Activated T-helper 1 cell treated with anti-CD3 and anti-CD28 coated beads, Interleukin-12 subunit alpha, Interleukin-12 subunit beta, Interleukin-2, Interleukin-4 antibody, amounts not matched to agents 30 ng/mL and 10 ng/mL and 1 ng/mL, durations not matched to agents 14 hours and 24 hours and 36 hours (primary cell): ENCODE measurements at regions of chr15 and their contacts with region 1.

Region 1: GRCh38 chr15:58980351-58980939 is 7.0 kb upstream of the RNF111 start:
- DNase-seq: no peak
- H3K4me3 Mint-ChIP-seq: no peak overlapping the region
- H3K27ac Mint-ChIP-seq: peak overlapping the region; percentile 14
- H3K4me1 Mint-ChIP-seq: peaks cover 50% of the 10 kb centered on the region
- H3K27me3 Mint-ChIP-seq: peaks cover 8% of the 10 kb centered on the region

Region 2: GRCh38 chr15:58957101-58957973 is 23.1 kb before region 1 on chr15:
- intact Hi-C with region 1: loop called (anchors 1 kb)
- DNase-seq: peak; percentile 45
- H3K4me3 Mint-ChIP-seq: no peak overlapping the region
- H3K27ac Mint-ChIP-seq: no peak overlapping the region
- H3K4me1 Mint-ChIP-seq: peaks cover 17% of the 10 kb centered on the region
- H3K27me3 Mint-ChIP-seq: peaks cover 11% of the 10 kb centered on the region

Region 3: DNA sequence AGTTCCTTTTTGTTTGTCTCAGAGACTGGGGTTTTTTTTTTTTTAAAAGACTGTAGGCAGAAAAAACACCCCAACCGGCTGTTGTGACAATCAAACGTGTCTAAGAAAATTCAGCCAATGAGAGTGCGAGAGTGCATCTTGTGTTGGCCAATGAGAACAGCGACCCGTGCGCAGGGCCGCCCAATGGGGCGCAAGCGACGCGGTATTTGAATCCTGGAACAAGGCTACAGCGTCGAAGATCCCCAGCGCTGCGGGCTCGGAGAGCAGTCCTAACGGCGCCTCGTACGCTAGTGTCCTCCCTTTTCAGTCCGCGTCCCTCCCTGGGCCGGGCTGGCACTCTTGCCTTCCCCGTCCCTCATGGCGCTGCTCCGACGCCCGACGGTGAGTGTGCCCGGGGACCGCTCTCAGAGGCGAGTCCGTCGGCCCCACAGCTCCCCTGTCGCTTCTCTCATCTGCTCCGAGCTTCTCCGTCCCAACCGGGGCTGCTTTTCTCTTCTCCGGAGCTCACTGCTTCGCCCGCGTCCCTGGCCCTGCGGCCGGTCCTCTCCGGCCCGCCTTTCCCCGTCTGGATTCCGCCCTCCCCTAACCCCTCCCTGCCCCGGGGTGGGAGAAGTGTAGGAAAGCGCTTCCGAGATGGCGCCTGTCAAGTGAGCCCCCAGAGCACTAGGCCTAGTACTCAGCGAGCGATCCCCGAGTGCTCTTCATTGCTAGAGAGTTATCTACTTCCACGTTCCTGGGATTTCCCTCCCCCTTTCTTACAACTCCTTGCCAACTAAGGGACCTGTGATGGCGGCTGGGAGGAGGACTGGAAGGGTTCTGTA is 124.7 kb after region 1 on chr15 and contains the start of gene CCNB2:
- intact Hi-C with region 1: loop called (anchors 2 kb)
- DNase-seq: peak; percentile 85
- H3K4me3 Mint-ChIP-seq: peak within 1 kb of the TSS; percentile 96
- H3K27ac Mint-ChIP-seq: peak within 1 kb of the TSS; percentile 99
- H3K4me1 Mint-ChIP-seq: peaks cover 46% of the 10 kb centered on the region
- H3K27me3 Mint-ChIP-seq: no peaks in the 10 kb centered on the region
- total RNA-seq, gene CCNB2: 36.6 and 38.2 TPM in 2 replicates

Region 4: DNA sequence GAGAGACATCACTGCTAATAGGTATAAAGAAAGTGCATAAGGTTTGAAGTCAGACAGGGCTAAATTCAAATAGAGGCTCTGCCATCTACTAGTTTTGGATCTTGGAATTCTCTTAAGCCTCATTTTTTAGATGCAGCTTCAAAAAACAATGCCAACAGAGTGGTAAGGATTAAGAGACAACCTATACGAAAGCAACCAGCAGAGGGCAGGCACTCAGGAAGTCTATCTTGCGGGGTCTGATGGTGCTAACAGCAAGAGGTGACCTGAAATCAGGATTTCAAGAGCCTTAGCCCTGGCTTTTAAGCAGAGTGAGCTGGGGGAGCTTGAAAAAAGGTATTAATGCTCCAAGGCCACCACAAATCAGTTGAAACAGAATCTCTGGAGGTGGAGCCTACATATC is 266.9 kb after region 1 on chr15:
- intact Hi-C with region 1: loop called (anchors 5 kb)
- DNase-seq: peak; percentile 38
- H3K4me3 Mint-ChIP-seq: no peak overlapping the region
- H3K27ac Mint-ChIP-seq: no peak overlapping the region
- H3K4me1 Mint-ChIP-seq: peaks cover 27% of the 10 kb centered on the region
- H3K27me3 Mint-ChIP-seq: no peaks in the 10 kb centered on the region

Region 5: GRCh38 chr15:59360305-59360704 is 379.9 kb after region 1 on chr15:
- intact Hi-C with region 1: no loop called
- DNase-seq: no peak
- H3K4me3 Mint-ChIP-seq: no peak overlapping the region
- H3K27ac Mint-ChIP-seq: no peak overlapping the region
- H3K4me1 Mint-ChIP-seq: peaks cover 11% of the 10 kb centered on the region
- H3K27me3 Mint-ChIP-seq: peaks cover 10% of the 10 kb centered on the region

Region 6: GRCh38 chr15:59492389-59493377 is 512.2 kb after region 1 on chr15:
- intact Hi-C with region 1: loop called (anchors 1 kb)
- DNase-seq: peak; percentile 25
- H3K4me3 Mint-ChIP-seq: no peak overlapping the region
- H3K27ac Mint-ChIP-seq: no peak overlapping the region
- H3K4me1 Mint-ChIP-seq: no peaks in the 10 kb centered on the region
- H3K27me3 Mint-ChIP-seq: peaks cover 32% of the 10 kb centered on the region